ENCODE measurements at regions of chr7 and their contacts with region 1.

Region 1: DNA sequence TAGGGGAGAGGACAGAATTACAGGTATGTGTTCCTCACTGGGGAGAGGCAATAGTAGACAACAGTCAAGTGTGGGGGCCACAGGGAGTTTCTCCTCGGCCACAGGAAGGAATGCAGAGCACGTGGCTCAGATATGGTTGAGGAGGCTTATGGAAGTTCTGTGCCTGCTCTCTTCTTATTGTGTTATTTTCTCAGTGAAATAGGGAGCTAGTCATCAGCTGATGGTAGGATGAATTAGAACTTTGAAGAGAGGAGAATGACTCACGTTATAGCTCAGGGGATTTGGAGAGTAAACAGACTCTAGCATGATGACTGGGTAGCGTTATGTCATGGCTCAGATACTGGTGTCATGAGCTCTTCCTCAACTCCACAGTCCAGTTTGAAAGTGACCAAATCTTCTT is 308.3 kb upstream of the IGFBP3 start:
- DNase-seq: no peak
- H3K4me3 Mint-ChIP-seq: no peak overlapping the region
- H3K27ac Mint-ChIP-seq: no peak overlapping the region
- H3K4me1 Mint-ChIP-seq: no peaks in the 10 kb centered on the region
- H3K27me3 Mint-ChIP-seq: peaks cover 4% of the 10 kb centered on the region

Region 2: DNA sequence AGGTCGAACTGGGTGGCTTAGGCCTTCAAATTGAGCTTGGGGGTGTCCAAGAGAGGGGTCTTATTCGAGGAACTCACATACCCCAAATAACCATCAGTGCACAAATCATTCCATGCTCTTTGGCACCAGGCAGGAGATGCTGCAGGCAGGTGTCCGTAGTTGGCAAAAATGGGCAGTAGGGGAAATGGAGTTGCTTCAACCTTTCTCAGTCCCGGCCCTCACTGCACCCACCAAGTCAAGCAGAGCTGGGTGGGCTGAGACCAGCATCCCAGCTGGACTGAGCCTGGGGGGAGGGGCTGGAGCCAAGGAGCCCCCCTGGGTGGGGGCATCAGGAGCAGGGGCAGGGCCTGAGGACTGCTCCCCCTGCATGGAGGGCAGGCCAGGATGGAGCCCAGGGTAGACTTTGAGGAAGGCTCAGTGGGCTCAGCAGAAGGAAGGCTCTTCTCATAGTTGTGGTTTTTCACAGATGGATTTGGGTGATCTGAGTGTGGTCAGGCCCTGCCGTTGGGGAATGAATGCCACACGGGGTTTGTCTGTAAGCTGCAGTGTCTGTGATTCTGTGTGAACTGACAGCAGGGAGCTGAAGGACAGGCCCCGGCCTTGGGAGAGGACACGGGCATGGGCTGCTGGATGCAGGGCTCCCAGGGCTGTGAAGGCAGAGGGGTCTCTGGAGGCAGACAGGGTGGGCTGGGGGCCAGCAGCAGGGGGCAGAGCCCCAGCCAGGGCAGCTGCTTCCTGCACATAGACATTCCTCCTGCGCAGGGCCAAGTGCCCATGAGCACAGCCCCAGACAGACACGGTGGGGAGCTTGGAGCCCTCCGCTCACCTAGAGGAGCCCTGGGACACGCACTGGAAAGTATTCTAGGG is 510.7 kb before region 1 on chr7:
- intact Hi-C with region 1: no loop called
- DNase-seq: no peak
- H3K4me3 Mint-ChIP-seq: no peak overlapping the region
- H3K27ac Mint-ChIP-seq: no peak overlapping the region
- H3K4me1 Mint-ChIP-seq: no peaks in the 10 kb centered on the region
- H3K27me3 Mint-ChIP-seq: no peaks in the 10 kb centered on the region

Region 3: DNA sequence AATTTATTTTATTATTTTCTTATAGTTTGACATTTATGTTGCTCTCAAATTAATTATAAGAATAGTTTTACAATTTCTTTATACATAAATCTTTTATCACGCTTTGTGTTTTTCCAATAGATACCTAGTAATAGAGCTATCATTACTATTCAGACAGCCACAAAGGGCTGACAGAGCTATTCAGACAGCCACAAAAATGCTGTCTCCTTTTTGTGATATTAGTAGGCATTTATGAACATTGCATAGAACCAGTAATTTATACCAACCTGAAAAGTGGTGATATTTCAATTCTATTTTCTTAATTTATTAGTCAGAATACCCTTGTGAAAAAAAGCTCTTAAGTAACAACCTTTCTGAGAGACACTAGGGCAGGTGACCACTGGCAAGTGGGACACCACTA is 274.1 kb before region 1 on chr7:
- intact Hi-C with region 1: no loop called
- DNase-seq: no peak
- H3K4me3 Mint-ChIP-seq: no peak overlapping the region
- H3K27ac Mint-ChIP-seq: no peak overlapping the region
- H3K4me1 Mint-ChIP-seq: no peaks in the 10 kb centered on the region
- H3K27me3 Mint-ChIP-seq: no peaks in the 10 kb centered on the region

Region 4: DNA sequence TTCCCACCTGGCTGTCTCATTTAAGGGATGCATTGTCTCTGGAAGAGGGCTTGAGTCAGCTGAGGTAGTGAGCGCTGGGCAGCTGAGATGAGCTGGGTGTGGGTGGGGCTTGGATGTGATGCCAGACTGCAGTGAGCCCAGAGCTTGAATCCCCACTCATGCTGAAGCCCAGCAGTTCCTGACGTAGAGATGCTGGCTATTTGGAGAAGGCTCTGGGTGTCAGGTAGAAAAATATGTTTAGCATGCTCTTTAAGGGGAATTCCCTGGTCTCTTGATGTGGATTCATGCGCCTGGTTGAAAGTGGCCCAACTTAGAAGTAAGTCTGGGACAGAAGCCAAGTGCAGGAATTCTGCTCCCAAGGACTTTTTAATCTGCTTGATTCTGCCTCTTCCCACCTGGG is 66.8 kb before region 1 on chr7:
- intact Hi-C with region 1: loop called (anchors 10 kb)
- DNase-seq: no peak
- H3K4me3 Mint-ChIP-seq: no peak overlapping the region
- H3K27ac Mint-ChIP-seq: no peak overlapping the region
- H3K4me1 Mint-ChIP-seq: no peaks in the 10 kb centered on the region
- H3K27me3 Mint-ChIP-seq: no peaks in the 10 kb centered on the region

Measured in activated T-helper 1 cell treated with anti-CD3 and anti-CD28 coated beads, Interleukin-12 subunit alpha, Interleukin-12 subunit beta, Interleukin-2, Interleukin-4 antibody, amounts not matched to agents 30 ng/mL and 10 ng/mL and 1 ng/mL, durations not matched to agents 14 hours and 24 hours and 36 hours (primary cell).